CD4-positive, alpha-beta T cell (primary cell): ENCODE measurements at regions of chr18 and their contacts with region 1.

Region 1: GRCh38 chr18:74436158-74436769 is 20.8 kb downstream of the DIPK1C start:
- DNase-seq: no peak
- ATAC-seq: no peak
- H3K4me3 ChIP-seq: no peak overlapping the region
- H3K4me3 Mint-ChIP-seq: no peak overlapping the region
- H3K27ac ChIP-seq: no peak overlapping the region
- H3K27ac Mint-ChIP-seq: no peak overlapping the region
- H3K4me1 ChIP-seq: no peaks in the 10 kb centered on the region
- H3K4me1 Mint-ChIP-seq: no peaks in the 10 kb centered on the region
- H3K27me3 ChIP-seq: no peaks in the 10 kb centered on the region
- H3K27me3 Mint-ChIP-seq: no peaks in the 10 kb centered on the region
- CTCF ChIP-seq: no peak

Region 2: GRCh38 chr18:74465775-74466174 is 29.5 kb after region 1 on chr18:
- CTCF ChIA-PET with region 1: no interaction called
- POLR2A ChIA-PET with region 1: no interaction called
- intact Hi-C with region 1: no loop called
- DNase-seq: no peak
- ATAC-seq: no peak
- H3K4me3 ChIP-seq: no peak overlapping the region
- H3K4me3 Mint-ChIP-seq: no peak overlapping the region
- H3K27ac ChIP-seq: no peak overlapping the region
- H3K27ac Mint-ChIP-seq: no peak overlapping the region
- H3K4me1 ChIP-seq: no peaks in the 10 kb centered on the region
- H3K4me1 Mint-ChIP-seq: no peaks in the 10 kb centered on the region
- H3K27me3 ChIP-seq: no peaks in the 10 kb centered on the region
- H3K27me3 Mint-ChIP-seq: no peaks in the 10 kb centered on the region
- CTCF ChIP-seq: no peak

Region 3: GRCh38 chr18:74476140-74476539 is 39.9 kb after region 1 on chr18:
- CTCF ChIA-PET with region 1: no interaction called
- POLR2A ChIA-PET with region 1: no interaction called
- intact Hi-C with region 1: loop called in 1 of 2 experiments (anchors 5 kb)
- DNase-seq: no peak
- ATAC-seq: no peak
- H3K4me3 ChIP-seq: no peak overlapping the region
- H3K4me3 Mint-ChIP-seq: no peak overlapping the region
- H3K27ac ChIP-seq: no peak overlapping the region
- H3K27ac Mint-ChIP-seq: no peak overlapping the region
- H3K4me1 ChIP-seq: no peaks in the 10 kb centered on the region
- H3K4me1 Mint-ChIP-seq: no peaks in the 10 kb centered on the region
- H3K27me3 ChIP-seq: no peaks in the 10 kb centered on the region
- H3K27me3 Mint-ChIP-seq: peaks cover 13% of the 10 kb centered on the region
- CTCF ChIP-seq: no peak